ENCODE measurements at regions of chr6 and their contacts with region 1.

Region 1: GRCh38 chr6:109491207-109491938 is 8.4 kb upstream of the ZBTB24 start:
- DNase-seq: peak in 17 of 35 experiments; percentile 4 to 56 (median 18)
- ATAC-seq: peak; percentile 97 to 99 (median 99)
- H3K4me3 ChIP-seq: no peak overlapping the region
- H3K4me3 Mint-ChIP-seq: peak overlapping the region in 1 of 3 donors; percentile 18
- H3K27ac ChIP-seq: peak overlapping the region; percentile 69
- H3K27ac Mint-ChIP-seq: peak overlapping the region; percentile 87 to 92
- H3K4me1 ChIP-seq: peaks cover 15% of the 10 kb centered on the region in 2 experiments
- H3K4me1 Mint-ChIP-seq: peaks cover 17 to 25% (median 19%) of the 10 kb centered on the region in 3 donors
- H3K27me3 ChIP-seq: no peaks in the 10 kb centered on the region
- H3K27me3 Mint-ChIP-seq: no peaks in the 10 kb centered on the region

Region 2: GRCh38 chr6:109344206-109344605 is 147.2 kb before region 1 on chr6:
- CTCF ChIA-PET with region 1: no interaction called
- POLR2A ChIA-PET with region 1: no interaction called
- DNase-seq: no peak
- ATAC-seq: no peak
- H3K4me3 ChIP-seq: no peak overlapping the region
- H3K4me3 Mint-ChIP-seq: no peak overlapping the region
- H3K27ac ChIP-seq: no peak overlapping the region
- H3K27ac Mint-ChIP-seq: no peak overlapping the region
- H3K4me1 ChIP-seq: no peaks in the 10 kb centered on the region
- H3K4me1 Mint-ChIP-seq: peaks cover 0 to 1% (median 0%) of the 10 kb centered on the region in 3 donors
- H3K27me3 ChIP-seq: no peaks in the 10 kb centered on the region
- H3K27me3 Mint-ChIP-seq: no peaks in the 10 kb centered on the region

Region 3: DNA sequence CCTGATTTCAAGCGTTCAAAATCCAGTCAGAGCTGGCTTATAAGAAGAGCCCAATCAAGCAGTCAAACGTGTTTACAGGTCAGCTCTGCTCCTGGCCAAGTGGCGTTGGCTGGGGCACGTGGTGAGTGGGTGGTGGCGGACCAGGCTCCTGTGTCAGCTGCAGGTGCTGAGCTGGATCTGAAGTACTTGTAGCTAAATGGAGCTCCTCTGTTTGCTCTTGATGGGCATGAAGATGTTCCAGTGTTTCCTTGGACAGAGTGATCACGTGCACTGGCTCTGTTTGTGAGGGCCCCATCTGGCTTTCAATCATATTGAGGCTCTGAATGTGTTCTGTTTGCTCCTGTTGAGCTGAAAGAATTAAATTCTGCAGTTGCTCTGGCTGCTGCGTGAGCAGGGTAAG is 25.6 kb before region 1 on chr6:
- CTCF ChIA-PET with region 1: interaction called in 1 of 2 experiments, 20 read pairs
- POLR2A ChIA-PET with region 1: interaction called in 1 of 2 experiments, 11 read pairs
- DNase-seq: no peak
- ATAC-seq: no peak
- H3K4me3 ChIP-seq: no peak overlapping the region
- H3K4me3 Mint-ChIP-seq: no peak overlapping the region
- H3K27ac ChIP-seq: no peak overlapping the region
- H3K27ac Mint-ChIP-seq: peak overlapping the region; percentile 59 to 62
- H3K4me1 ChIP-seq: peaks cover 0 to 4% of the 10 kb centered on the region in 2 experiments
- H3K4me1 Mint-ChIP-seq: peaks cover 44 to 62% (median 60%) of the 10 kb centered on the region in 3 donors
- H3K27me3 ChIP-seq: no peaks in the 10 kb centered on the region
- H3K27me3 Mint-ChIP-seq: no peaks in the 10 kb centered on the region

Region 4: GRCh38 chr6:109471105-109471810 is 20.1 kb before region 1 on chr6:
- CTCF ChIA-PET with region 1: interaction called in 1 of 2 experiments, 20 read pairs
- POLR2A ChIA-PET with region 1: no interaction called
- DNase-seq: no peak
- ATAC-seq: no peak
- H3K4me3 ChIP-seq: no peak overlapping the region
- H3K4me3 Mint-ChIP-seq: no peak overlapping the region
- H3K27ac ChIP-seq: no peak overlapping the region
- H3K27ac Mint-ChIP-seq: peak overlapping the region; percentile 25 to 28
- H3K4me1 ChIP-seq: peaks cover 0 to 15% of the 10 kb centered on the region in 2 experiments
- H3K4me1 Mint-ChIP-seq: peaks cover 58 to 71% (median 61%) of the 10 kb centered on the region in 3 donors
- H3K27me3 ChIP-seq: no peaks in the 10 kb centered on the region
- H3K27me3 Mint-ChIP-seq: no peaks in the 10 kb centered on the region

Region 5: GRCh38 chr6:109503327-109504224 is 12.2 kb after region 1 on chr6:
- CTCF ChIA-PET with region 1: no interaction called
- POLR2A ChIA-PET with region 1: no interaction called
- DNase-seq: no peak
- ATAC-seq: no peak
- H3K4me3 ChIP-seq: no peak overlapping the region
- H3K4me3 Mint-ChIP-seq: no peak overlapping the region
- H3K27ac ChIP-seq: no peak overlapping the region
- H3K27ac Mint-ChIP-seq: no peak overlapping the region
- H3K4me1 ChIP-seq: no peaks in the 10 kb centered on the region
- H3K4me1 Mint-ChIP-seq: no peaks in the 10 kb centered on the region
- H3K27me3 ChIP-seq: peaks cover 0 to 5% of the 10 kb centered on the region in 2 experiments
- H3K27me3 Mint-ChIP-seq: no peaks in the 10 kb centered on the region

Measured in T-cell (primary cell).